Activated CD8-positive, alpha-beta T cell treated with anti-CD3 and anti-CD28 coated beads for 36 hours (primary cell): ENCODE measurements at regions of chr3 and their contacts with region 1.

Region 1: GRCh38 chr3:42247576-42248027 is 18.4 kb downstream of the CCK start:
- DNase-seq: peak; percentile 75
- ATAC-seq: peak; percentile 70
- H3K4me3 Mint-ChIP-seq: no peak overlapping the region
- H3K27ac Mint-ChIP-seq: no peak overlapping the region
- H3K4me1 Mint-ChIP-seq: peaks cover 3% of the 10 kb centered on the region
- H3K27me3 Mint-ChIP-seq: peaks cover 2% of the 10 kb centered on the region
- CTCF ChIP-seq: peak; percentile 94

Region 2: DNA sequence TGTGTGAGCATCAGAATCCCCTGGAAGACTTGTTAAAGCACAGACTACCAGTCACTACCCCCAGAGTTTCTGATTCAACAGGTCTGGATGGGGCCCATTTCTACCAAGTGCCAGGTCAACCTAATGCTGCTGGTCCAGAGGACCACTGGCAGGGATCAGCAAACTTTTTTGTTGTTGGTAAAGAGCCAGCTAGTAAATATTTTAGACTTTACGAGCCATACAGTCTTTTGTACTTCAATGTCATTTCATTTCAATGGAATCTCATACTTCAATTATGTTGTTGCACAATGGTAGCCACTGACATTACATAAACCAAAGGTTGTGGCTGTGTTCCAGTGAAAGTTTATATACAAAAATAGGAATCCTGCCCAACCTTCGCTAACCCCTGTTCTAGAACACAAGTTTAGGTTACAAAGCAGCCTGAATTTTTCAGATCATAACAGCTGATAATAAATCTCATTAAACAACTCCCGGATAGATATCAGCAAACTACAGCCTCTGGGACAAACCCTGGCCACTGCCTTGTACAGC is 314.4 kb before region 1 on chr3:
- CTCF ChIA-PET with region 1: no interaction called
- POLR2A ChIA-PET with region 1: no interaction called
- intact Hi-C with region 1: no loop called
- DNase-seq: no peak
- ATAC-seq: no peak
- H3K4me3 Mint-ChIP-seq: no peak overlapping the region
- H3K27ac Mint-ChIP-seq: no peak overlapping the region
- H3K4me1 Mint-ChIP-seq: no peaks in the 10 kb centered on the region
- H3K27me3 Mint-ChIP-seq: no peaks in the 10 kb centered on the region
- CTCF ChIP-seq: no peak

Region 3: DNA sequence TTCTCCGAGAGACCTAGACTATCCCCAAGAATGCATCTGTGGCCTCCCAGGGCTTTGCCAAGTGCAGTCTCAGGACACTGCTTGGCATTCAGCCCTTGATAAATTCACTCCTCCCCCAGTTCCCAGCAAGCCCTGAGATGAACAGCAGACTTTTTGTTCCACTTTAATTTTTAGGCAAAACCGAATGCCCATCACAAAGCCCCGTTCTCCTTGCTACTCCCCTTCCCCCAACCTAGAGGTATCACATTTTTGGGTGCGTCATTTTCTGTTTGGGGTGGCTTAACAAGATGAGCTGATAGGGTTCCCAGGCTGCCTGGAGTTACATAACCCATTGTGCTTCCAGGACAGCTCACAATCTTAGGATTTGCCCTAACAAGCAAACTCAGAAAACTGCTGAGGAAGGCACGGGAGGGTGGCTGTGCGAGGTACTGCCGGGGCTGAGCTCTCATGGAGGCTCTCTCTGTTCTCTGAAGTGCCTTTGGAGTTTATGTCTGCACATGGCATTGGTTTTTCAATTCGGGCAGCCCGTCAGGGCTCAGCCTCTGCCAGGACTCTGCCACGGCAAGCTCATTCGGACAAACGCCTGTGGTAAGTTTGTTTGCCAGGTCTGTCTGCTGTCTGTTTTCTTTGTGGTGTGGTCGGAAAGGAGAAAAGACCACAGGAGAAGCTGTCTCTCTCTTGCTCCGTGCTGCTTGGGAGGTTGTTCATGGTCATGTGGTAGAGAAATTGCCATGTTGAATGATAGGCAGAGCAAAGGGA is 156.4 kb before region 1 on chr3 and contains the start of gene TRAK1:
- CTCF ChIA-PET with region 1: no interaction called
- POLR2A ChIA-PET with region 1: no interaction called
- intact Hi-C with region 1: no loop called
- DNase-seq: no peak
- ATAC-seq: no peak
- H3K4me3 Mint-ChIP-seq: peak within 1 kb of the TSS; percentile 28
- H3K27ac Mint-ChIP-seq: peak within 1 kb of the TSS; percentile 39
- H3K4me1 Mint-ChIP-seq: peaks cover 75% of the 10 kb centered on the region
- H3K27me3 Mint-ChIP-seq: no peaks in the 10 kb centered on the region
- CTCF ChIP-seq: no peak
- total RNA-seq, gene TRAK1: 24.1 to 24.3 TPM

Region 4: GRCh38 chr3:42229942-42230688 is 17.5 kb before region 1 on chr3:
- CTCF ChIA-PET with region 1: interaction called, 13 read pairs
- POLR2A ChIA-PET with region 1: no interaction called
- intact Hi-C with region 1: no loop called
- DNase-seq: no peak
- ATAC-seq: no peak
- H3K4me3 Mint-ChIP-seq: no peak overlapping the region
- H3K27ac Mint-ChIP-seq: no peak overlapping the region
- H3K4me1 Mint-ChIP-seq: no peaks in the 10 kb centered on the region
- H3K27me3 Mint-ChIP-seq: peaks cover 2% of the 10 kb centered on the region
- CTCF ChIP-seq: peak; percentile 21

Region 5: GRCh38 chr3:42273361-42273760 is 25.8 kb after region 1 on chr3:
- CTCF ChIA-PET with region 1: interaction called, 12 read pairs
- POLR2A ChIA-PET with region 1: no interaction called
- intact Hi-C with region 1: no loop called
- DNase-seq: no peak
- ATAC-seq: no peak
- H3K4me3 Mint-ChIP-seq: no peak overlapping the region
- H3K27ac Mint-ChIP-seq: no peak overlapping the region
- H3K4me1 Mint-ChIP-seq: no peaks in the 10 kb centered on the region
- H3K27me3 Mint-ChIP-seq: peaks cover 22% of the 10 kb centered on the region
- CTCF ChIP-seq: no peak

Region 6: DNA sequence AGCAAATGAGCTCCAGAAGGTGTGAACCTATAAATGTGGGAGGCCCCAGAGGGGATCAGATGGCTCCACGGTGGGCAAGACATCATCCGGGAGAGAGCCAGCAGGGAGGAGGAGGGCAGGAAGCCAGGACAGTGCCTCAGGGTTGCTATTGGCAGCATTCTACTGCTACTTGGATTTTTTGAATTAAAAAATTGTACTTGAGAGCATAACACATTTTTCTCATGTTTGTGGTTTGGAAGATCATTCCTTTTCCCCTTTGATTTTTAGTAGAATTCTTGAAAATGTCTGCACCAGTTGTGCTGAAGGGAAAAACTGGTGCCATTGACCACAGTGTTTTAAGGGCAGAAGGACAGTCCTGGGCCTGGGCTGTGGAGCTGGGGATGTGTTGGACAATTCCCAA is 103.6 kb after region 1 on chr3:
- CTCF ChIA-PET with region 1: no interaction called
- POLR2A ChIA-PET with region 1: no interaction called
- intact Hi-C with region 1: no loop called
- DNase-seq: no peak
- ATAC-seq: no peak
- H3K4me3 Mint-ChIP-seq: no peak overlapping the region
- H3K27ac Mint-ChIP-seq: no peak overlapping the region
- H3K4me1 Mint-ChIP-seq: no peaks in the 10 kb centered on the region
- H3K27me3 Mint-ChIP-seq: peaks cover 6% of the 10 kb centered on the region
- CTCF ChIP-seq: no peak

Region 7: GRCh38 chr3:42434777-42435380 is 187.3 kb after region 1 on chr3:
- CTCF ChIA-PET with region 1: interaction called, 139 read pairs
- POLR2A ChIA-PET with region 1: no interaction called
- intact Hi-C with region 1: no loop called
- DNase-seq: no peak
- ATAC-seq: no peak
- H3K4me3 Mint-ChIP-seq: no peak overlapping the region
- H3K27ac Mint-ChIP-seq: no peak overlapping the region
- H3K4me1 Mint-ChIP-seq: no peaks in the 10 kb centered on the region
- H3K27me3 Mint-ChIP-seq: peaks cover 11% of the 10 kb centered on the region
- CTCF ChIP-seq: no peak

Region 8: GRCh38 chr3:42539869-42540714 is 292.5 kb after region 1 on chr3:
- CTCF ChIA-PET with region 1: interaction called, 13 read pairs
- POLR2A ChIA-PET with region 1: no interaction called
- intact Hi-C with region 1: loop called (anchors 10 kb)
- DNase-seq: peak; percentile 77
- ATAC-seq: peak; percentile 79
- H3K4me3 Mint-ChIP-seq: no peak overlapping the region
- H3K27ac Mint-ChIP-seq: no peak overlapping the region
- H3K4me1 Mint-ChIP-seq: no peaks in the 10 kb centered on the region
- H3K27me3 Mint-ChIP-seq: no peaks in the 10 kb centered on the region
- CTCF ChIP-seq: peak; percentile 88